IMR-90 (cell line): ENCODE measurements at regions of chr21 and their contacts with region 1.

Region 1: GRCh38 chr21:35414507-35415139 is 365.5 kb upstream of the RUNX1 start:
- DNase-seq: peak; percentile 33
- ATAC-seq: peak; percentile 63
- H3K4me3 ChIP-seq: no peak overlapping the region
- H3K27ac ChIP-seq: no peak overlapping the region
- H3K4me1 ChIP-seq: peaks cover 2% of the 10 kb centered on the region; the same call in 1 of the 2 replicates
- H3K27me3 ChIP-seq: no peaks in the 10 kb centered on the region
- CTCF ChIP-seq: no peak
- POLR2A ChIP-seq: no peak
- RAD21 ChIP-seq: no peak

Region 2: DNA sequence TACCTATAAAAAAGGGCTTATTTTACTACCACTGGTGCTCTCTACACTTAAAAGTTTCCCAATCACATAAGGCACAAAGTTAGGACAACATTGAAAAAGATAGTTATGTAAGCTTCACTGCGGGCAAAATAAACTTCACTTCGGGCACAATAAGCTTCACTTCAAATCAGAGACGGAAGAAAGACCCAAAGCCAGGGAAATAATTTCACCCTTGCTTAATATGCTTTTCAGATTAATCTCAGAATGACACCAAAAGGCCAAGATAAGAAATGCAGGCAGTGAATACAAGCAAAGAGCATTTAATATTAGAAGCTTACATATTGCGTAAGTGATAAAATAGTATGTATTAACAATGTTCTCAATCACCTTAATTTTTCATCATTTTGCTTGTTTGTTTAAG is 201.5 kb after region 1 on chr21:
- CTCF ChIA-PET with region 1: no interaction called
- POLR2A ChIA-PET with region 1: no interaction called
- dilution Hi-C with region 1: no loop called
- in situ Hi-C with region 1: no loop called
- intact Hi-C with region 1: loop called (anchors 10 kb)
- DNase-seq: peak; percentile 70
- ATAC-seq: peak; percentile 66
- H3K4me3 ChIP-seq: no peak overlapping the region
- H3K27ac ChIP-seq: no peak overlapping the region
- H3K4me1 ChIP-seq: peaks cover 9% of the 10 kb centered on the region
- H3K27me3 ChIP-seq: no peaks in the 10 kb centered on the region
- CTCF ChIP-seq: peak; percentile 60
- POLR2A ChIP-seq: no peak
- RAD21 ChIP-seq: peak; percentile 63